H1 (cell line): ENCODE measurements at regions of chr2 and their contacts with region 1.

Region 1: DNA sequence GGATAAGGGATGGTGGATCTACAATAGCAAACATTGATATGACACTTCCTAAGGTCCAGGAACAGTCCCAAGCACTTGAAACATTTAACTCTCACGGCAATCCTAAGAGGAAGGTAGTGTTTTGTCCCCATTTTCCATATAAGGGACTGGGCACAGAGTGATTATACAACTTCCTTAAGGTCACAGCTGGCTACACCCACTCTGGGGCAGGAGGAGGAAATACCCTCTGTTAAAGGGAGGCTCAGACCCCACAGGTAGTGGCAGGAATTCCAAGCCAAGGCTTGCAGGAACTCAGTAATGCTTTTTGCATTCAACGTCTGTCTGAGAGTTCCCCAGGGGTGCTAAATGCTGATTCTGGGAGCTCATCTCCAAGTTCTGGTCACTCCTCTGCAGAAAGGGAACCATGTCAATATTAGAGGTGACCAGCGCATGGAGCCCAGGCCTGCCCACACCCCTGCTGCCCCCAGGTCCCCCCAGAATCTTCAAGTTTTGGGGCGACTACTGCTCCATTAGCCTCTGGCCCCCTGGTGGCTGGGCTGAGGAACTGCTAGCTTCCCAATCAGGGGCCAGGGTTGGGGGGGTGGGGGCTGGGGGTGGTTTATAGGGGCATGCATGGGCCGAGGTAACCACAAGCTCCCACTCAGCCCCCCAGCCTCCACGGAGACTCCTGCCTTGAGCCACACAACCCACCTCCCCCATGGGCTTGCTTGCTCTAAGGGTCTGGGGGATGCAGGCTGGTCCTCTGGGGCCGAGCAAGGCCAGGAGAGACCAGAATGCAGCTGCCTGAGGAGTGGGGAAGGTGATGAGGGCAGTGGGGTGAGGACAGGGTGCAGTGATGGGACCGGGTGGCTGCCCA is 11.1 kb downstream of the OBSL1 start:
- DNase-seq: peak in 1 of 2 experiments; percentile 79
- H3K4me3 ChIP-seq: no peak overlapping the region
- H3K27ac ChIP-seq: peak overlapping the region; percentile 54; the same call in 1 of the 2 replicates
- H3K4me1 ChIP-seq: peaks cover 6 to 43% (median 36%) of the 10 kb centered on the region in 4 experiments
- H3K27me3 ChIP-seq: no peaks in the 10 kb centered on the region
- CTCF ChIP-seq: peak in 2 of 3 experiments; percentile 51 to 54; a peak in 3 of 4 replicates
- EP300 ChIP-seq: no peak
- POLR2A ChIP-seq: peak in 1 of 2 experiments; percentile 44; a peak in 1 of 3 replicates
- RAD21 ChIP-seq: peak; percentile 36 to 41

Region 2: GRCh38 chr2:219446081-219446521 is 114.2 kb before region 1 on chr2:
- CTCF ChIA-PET with region 1: no interaction called
- POLR2A ChIA-PET with region 1: no interaction called
- DNase-seq: no peak
- H3K4me3 ChIP-seq: no peak overlapping the region
- H3K27ac ChIP-seq: no peak overlapping the region
- H3K4me1 ChIP-seq: peaks cover 0 to 29% (median 14%) of the 10 kb centered on the region in 4 experiments; a peak in 6 of 7 replicates
- H3K27me3 ChIP-seq: peaks cover 6 to 35% (median 28%) of the 10 kb centered on the region in 4 experiments
- CTCF ChIP-seq: no peak
- EP300 ChIP-seq: no peak
- POLR2A ChIP-seq: no peak
- RAD21 ChIP-seq: no peak

Region 3: DNA sequence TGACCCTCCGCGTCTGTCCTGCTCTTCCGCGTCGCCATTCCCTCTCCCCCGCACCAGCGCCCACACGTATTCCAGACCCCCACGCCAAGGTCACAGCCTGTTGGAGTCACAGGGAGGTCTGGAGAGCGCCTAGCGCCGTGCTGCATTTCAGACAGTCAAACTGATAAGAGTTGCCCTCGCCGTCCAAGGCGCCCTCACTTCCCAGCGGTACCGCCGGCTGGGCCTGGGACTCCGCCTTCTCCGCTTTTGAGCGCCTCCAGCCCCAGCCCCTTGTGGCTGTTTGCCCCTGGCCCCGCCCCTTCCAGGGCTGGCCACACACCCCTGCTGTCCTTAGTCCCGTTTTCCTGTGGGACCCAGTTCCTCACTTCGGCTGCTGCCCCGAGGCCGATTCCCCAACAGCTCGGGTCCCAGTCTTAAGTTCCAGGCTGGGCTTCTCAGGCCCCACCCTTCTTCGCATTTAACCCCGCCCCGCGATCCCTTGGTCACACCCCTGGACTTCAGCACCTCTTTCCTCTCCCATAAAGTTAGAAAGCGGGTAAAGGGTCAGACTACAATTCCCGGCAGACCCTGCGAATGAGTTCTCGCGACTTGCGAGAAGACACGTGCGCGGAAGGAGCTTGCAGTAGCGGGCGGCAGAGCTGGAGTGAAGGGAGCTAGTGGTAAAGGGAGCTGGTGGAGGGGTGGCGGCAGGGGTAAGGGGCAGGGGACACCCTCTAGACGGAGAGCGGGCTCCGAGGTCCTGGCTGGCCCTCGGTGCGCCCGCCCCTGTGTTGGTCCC is 61.8 kb before region 1 on chr2 and contains the start of gene GMPPA:
- CTCF ChIA-PET with region 1: interaction called, 11 read pairs
- POLR2A ChIA-PET with region 1: no interaction called
- DNase-seq: peak; percentile 95 to 97
- H3K4me3 ChIP-seq: peak within 1 kb of the TSS; percentile 57 to 72 (median 65)
- H3K27ac ChIP-seq: no peak within 1 kb of the TSS
- H3K4me1 ChIP-seq: peaks cover 9 to 41% (median 21%) of the 10 kb centered on the region in 4 experiments
- H3K27me3 ChIP-seq: peaks cover 20 to 40% (median 32%) of the 10 kb centered on the region in 4 experiments
- CTCF ChIP-seq: no peak; a peak in 1 of 4 replicates
- EP300 ChIP-seq: no peak
- POLR2A ChIP-seq: peak in 1 of 2 experiments; percentile 46; a peak in 1 of 3 replicates
- RAD21 ChIP-seq: no peak
- total RNA-seq, gene GMPPA: 34.3 and 35.3 TPM in 2 replicates

Region 4: GRCh38 chr2:219571311-219572236 is 11.3 kb after region 1 on chr2 and contains the start of gene OBSL1:
- CTCF ChIA-PET with region 1: interaction called, 64 read pairs
- POLR2A ChIA-PET with region 1: interaction called, 293 read pairs
- DNase-seq: peak in 1 of 2 experiments; percentile 88
- H3K4me3 ChIP-seq: peak within 1 kb of the TSS; percentile 45 to 74 (median 58)
- H3K27ac ChIP-seq: peak within 1 kb of the TSS; percentile 42; the same call in 1 of the 2 replicates
- H3K4me1 ChIP-seq: peaks cover 2 to 29% (median 22%) of the 10 kb centered on the region in 4 experiments
- H3K27me3 ChIP-seq: peaks cover 0 to 2% (median 0%) of the 10 kb centered on the region in 4 experiments; a peak in 2 of 7 replicates
- CTCF ChIP-seq: no peak
- EP300 ChIP-seq: no peak
- POLR2A ChIP-seq: no peak; a peak in 1 of 3 replicates
- RAD21 ChIP-seq: no peak
- total RNA-seq, gene OBSL1: 127 and 135 TPM in 2 replicates

Region 5: GRCh38 chr2:219612577-219613286 is 52.5 kb after region 1 on chr2:
- CTCF ChIA-PET with region 1: interaction called, 51 read pairs
- POLR2A ChIA-PET with region 1: interaction called, 5 read pairs
- DNase-seq: no peak
- H3K4me3 ChIP-seq: no peak overlapping the region
- H3K27ac ChIP-seq: no peak overlapping the region
- H3K4me1 ChIP-seq: no peaks in the 10 kb centered on the region; a peak in 1 of 7 replicates
- H3K27me3 ChIP-seq: no peaks in the 10 kb centered on the region
- CTCF ChIP-seq: no peak
- EP300 ChIP-seq: no peak
- POLR2A ChIP-seq: no peak
- RAD21 ChIP-seq: no peak

Region 6: DNA sequence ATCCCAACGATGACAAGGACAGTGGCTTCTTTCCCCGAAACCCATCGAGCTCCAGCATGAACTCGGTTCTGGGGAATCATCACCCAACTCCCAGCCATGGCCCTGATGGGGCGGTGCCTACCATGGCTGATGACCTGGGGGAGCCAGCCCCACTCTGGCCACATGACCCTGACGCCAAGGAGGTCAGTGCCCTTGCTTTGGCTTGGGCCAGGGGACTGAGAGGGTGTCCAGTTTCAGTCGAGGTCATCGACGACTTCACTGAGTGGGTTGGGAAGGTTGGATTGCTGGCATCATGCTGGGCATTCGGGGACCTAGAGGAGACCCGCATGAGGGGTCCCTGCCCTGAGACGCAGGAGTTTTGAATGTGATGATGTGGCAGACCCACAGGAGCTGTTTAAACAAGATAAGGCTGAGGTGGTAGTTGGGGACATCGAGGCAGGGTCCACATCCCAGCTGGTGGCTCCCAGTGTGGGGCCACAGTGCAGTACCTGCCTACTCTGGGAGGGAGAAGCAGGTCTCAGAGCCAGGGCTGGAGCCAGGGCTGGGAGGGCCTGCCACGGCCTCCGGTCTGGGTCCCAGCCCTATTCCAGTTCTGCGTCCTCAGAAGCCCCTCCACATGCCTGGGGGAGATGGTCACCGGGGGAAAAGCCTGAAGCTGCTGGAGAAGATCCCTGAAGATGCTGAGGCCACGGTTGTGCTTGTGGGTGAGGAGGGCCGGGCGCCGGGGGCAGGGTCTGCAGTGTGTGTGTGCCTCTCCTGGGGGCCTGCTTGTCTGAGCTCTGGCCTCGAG is 73.2 kb after region 1 on chr2:
- CTCF ChIA-PET with region 1: interaction called, 22 read pairs
- POLR2A ChIA-PET with region 1: interaction called, 4 read pairs
- DNase-seq: no peak
- H3K4me3 ChIP-seq: no peak overlapping the region
- H3K27ac ChIP-seq: no peak overlapping the region
- H3K4me1 ChIP-seq: peaks cover 0 to 4% (median under 1%) of the 10 kb centered on the region in 4 experiments; a peak in 3 of 7 replicates
- H3K27me3 ChIP-seq: no peaks in the 10 kb centered on the region
- CTCF ChIP-seq: no peak
- EP300 ChIP-seq: no peak
- POLR2A ChIP-seq: no peak
- RAD21 ChIP-seq: no peak

Region 7: GRCh38 chr2:219769090-219769910 is 209.0 kb after region 1 on chr2:
- CTCF ChIA-PET with region 1: no interaction called
- POLR2A ChIA-PET with region 1: no interaction called
- DNase-seq: no peak
- H3K4me3 ChIP-seq: no peak overlapping the region
- H3K27ac ChIP-seq: no peak overlapping the region
- H3K4me1 ChIP-seq: no peaks in the 10 kb centered on the region
- H3K27me3 ChIP-seq: no peaks in the 10 kb centered on the region
- CTCF ChIP-seq: no peak
- EP300 ChIP-seq: no peak
- POLR2A ChIP-seq: no peak
- RAD21 ChIP-seq: no peak